ENCODE measurements at regions of chr4 and their contacts with region 1.

Region 1: GRCh38 chr4:41661442-41662076 is 87.0 kb downstream of the PHOX2B start:
- DNase-seq: peak; percentile 57
- ATAC-seq: peak; percentile 55
- H3K4me3 Mint-ChIP-seq: no peak overlapping the region
- H3K27ac Mint-ChIP-seq: no peak overlapping the region
- H3K4me1 Mint-ChIP-seq: peaks cover 9% of the 10 kb centered on the region
- H3K27me3 Mint-ChIP-seq: no peaks in the 10 kb centered on the region
- CTCF ChIP-seq: peak; percentile 87

Region 2: DNA sequence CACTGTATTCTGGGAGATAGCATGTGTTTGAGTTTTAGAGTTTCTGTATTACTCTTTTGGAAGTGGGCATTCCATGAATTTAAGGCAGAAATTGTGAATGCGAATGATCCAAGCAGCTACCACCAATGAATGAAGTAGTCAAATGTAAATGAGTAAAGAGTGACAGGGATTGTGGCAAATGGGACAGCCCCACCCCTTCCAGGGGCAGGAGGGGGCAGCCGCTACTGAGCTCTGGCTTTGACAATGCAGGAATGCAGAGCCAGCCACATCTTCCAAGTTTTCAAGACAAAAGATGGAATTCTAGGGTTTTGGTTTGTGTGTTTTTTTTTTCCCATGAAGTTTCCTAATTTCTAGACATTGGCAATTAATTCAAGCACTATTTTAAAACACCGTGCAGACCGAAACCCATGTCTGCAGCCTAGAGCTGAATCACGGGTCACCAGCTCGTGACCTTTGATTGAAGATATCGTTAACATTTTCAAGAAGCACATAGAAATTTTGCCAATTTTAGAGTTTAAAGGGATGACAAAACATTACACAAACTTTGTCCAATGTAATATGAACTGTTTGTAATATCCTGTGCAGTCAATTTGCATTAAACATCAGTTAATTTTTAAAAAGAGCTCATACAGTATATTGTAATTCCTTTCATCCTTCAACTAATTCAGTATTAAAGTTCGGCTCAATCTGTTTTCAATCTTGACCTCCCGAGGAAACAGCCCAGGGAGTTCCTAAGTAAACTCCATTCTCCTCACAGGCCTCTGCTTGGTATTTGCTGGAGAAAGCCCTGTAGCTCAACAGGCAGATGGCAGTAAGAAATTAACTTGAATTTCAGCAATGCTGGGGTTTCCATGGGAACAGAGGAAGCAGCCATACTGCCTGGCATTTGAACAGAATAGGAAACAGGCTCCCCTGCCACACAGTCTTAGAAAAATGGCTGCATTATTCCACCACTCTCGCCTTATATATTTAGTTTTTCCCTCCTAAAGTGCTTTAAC is 321.4 kb before region 1 on chr4:
- CTCF ChIA-PET with region 1: interaction called, 13 read pairs
- POLR2A ChIA-PET with region 1: interaction called, 4 read pairs
- DNase-seq: peak; percentile 58
- ATAC-seq: peak; percentile 92
- H3K4me3 Mint-ChIP-seq: no peak overlapping the region
- H3K27ac Mint-ChIP-seq: peak overlapping the region; percentile 82
- H3K4me1 Mint-ChIP-seq: peaks cover 20% of the 10 kb centered on the region
- H3K27me3 Mint-ChIP-seq: no peaks in the 10 kb centered on the region
- CTCF ChIP-seq: no peak

Region 3: GRCh38 chr4:41360214-41360920 is 301.2 kb before region 1 on chr4:
- CTCF ChIA-PET with region 1: interaction called, 15 read pairs
- POLR2A ChIA-PET with region 1: no interaction called
- DNase-seq: peak; percentile 64
- ATAC-seq: peak; percentile 28
- H3K4me3 Mint-ChIP-seq: peak overlapping the region; percentile 66
- H3K27ac Mint-ChIP-seq: no peak overlapping the region
- H3K4me1 Mint-ChIP-seq: peaks cover 40% of the 10 kb centered on the region
- H3K27me3 Mint-ChIP-seq: peaks cover 91% of the 10 kb centered on the region
- CTCF ChIP-seq: no peak

Region 4: GRCh38 chr4:41644288-41644914 is 17.2 kb before region 1 on chr4:
- CTCF ChIA-PET with region 1: interaction called, 16 read pairs
- POLR2A ChIA-PET with region 1: no interaction called
- DNase-seq: peak; percentile 94
- ATAC-seq: peak; percentile 97
- H3K4me3 Mint-ChIP-seq: peak overlapping the region; percentile 64
- H3K27ac Mint-ChIP-seq: no peak overlapping the region
- H3K4me1 Mint-ChIP-seq: peaks cover 14% of the 10 kb centered on the region
- H3K27me3 Mint-ChIP-seq: peaks cover 25% of the 10 kb centered on the region
- CTCF ChIP-seq: peak; percentile 90